Naive thymus-derived CD4-positive, alpha-beta T cell (primary cell): ENCODE measurements at regions of chr14 and their contacts with region 1.

Region 1: DNA sequence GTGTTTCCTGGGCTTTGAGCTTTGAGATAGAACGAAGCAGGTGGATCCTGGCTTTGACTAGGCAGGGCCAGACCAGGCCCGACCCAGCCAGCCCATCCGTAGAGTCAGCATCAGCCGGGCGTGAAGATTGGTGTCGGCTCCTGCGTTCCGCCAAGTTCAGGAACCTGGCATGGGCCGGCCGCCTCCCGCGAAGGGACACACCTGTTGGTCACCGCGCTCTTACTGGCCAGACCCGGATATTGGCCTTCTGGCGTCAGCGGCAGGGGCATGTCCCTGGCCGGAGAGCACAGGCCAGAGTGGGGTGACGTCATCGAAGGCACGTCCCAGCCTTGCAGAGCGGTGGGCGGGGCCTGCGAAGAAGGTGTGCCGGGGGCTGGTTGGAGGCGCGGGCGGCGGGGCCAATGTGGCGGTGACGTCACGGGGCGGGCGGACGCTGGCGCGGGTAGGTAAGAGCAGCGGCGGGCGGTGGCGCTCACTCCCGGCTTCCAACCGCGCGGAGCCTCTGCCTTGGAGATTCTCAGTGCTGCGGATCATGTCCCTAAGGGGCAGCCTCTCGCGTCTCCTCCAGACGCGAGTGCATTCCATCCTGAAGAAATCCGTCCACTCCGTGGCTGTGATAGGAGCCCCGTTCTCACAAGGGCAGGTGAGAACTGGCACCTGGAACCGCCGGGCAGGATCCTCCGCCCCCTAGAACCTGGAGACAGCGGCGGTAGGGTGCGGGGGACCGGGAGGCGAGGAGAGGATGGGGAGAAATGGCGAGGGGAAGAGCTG is at the start of gene ARG2:
- DNase-seq: peak; percentile 92 to 98 (median 95)
- ATAC-seq: peak; percentile 95
- H3K4me3 ChIP-seq: peak within 1 kb of the TSS; percentile 93
- H3K4me3 Mint-ChIP-seq: peak within 1 kb of the TSS; percentile 89 to 93 (median 90)
- H3K27ac ChIP-seq: peak within 1 kb of the TSS; percentile 82
- H3K27ac Mint-ChIP-seq: peak within 1 kb of the TSS; percentile 70 to 97 (median 94)
- H3K4me1 ChIP-seq: peaks cover 12 to 18% of the 10 kb centered on the region in 2 donors
- H3K4me1 Mint-ChIP-seq: peaks cover 21 to 42% (median 37%) of the 10 kb centered on the region in 7 donors
- H3K27me3 ChIP-seq: no peaks in the 10 kb centered on the region
- H3K27me3 Mint-ChIP-seq: peaks cover 0 to 23% (median 0%) of the 10 kb centered on the region in 5 donors
- total RNA-seq, gene ARG2: 0.46 to 5.1 (median 3.2) TPM

Region 2: DNA sequence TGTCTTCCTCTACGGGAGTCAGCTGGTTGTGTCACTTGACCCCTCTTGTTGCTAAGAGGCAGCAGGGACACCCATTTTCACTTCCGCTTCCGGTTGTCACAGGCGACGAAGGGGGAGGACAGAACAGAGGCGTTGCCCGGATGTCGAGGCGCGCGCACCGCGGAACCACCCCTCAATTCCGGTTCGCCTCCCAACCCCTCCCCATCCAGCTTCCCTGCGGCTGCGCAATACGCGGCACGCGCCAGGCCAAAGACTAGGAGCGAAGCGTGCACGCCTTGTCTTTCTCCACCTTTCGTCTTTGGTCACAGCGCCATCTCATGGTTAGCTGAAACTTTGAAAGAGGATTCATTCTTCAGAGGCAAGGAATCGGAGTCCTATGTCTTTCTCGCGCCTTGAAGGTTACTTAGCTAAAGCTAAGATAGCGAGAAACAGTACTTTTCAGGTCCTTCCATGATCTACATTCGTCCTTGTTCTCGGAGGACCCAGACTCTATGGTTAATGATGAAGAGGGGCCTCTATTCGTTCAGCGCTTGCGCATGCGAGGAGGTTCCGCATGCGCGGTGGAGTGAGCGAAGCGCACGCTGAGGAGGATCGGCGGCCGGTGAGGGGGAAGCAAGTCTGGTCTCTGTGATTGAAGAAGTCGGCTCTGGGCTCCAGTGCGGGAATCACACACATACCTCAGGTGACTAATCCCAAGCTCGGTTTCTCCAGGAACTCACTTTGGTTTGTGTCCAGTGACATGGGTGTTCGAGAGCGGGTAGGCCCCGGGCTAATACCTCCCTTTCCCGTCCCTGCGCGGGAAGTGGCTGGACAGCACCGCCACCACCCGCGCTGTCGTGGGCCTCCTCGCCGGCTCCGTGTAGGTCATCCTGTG is 259.6 kb before region 1 on chr14 and contains the starts of genes ATP6V1D and EIF2S1:
- CTCF ChIA-PET with region 1: interaction called, 3 read pairs
- POLR2A ChIA-PET with region 1: no interaction called
- intact Hi-C with region 1: loop called in 1 of 2 experiments (anchors 1 kb)
- DNase-seq: peak; percentile 97 to 100 (median 100)
- ATAC-seq: peak; percentile 94
- H3K4me3 ChIP-seq: peak within 1 kb of the TSS; percentile 87
- H3K4me3 Mint-ChIP-seq: peak within 1 kb of the TSS; percentile 93 to 99 (median 98)
- H3K27ac ChIP-seq: peak within 1 kb of the TSS; percentile 82
- H3K27ac Mint-ChIP-seq: peak within 1 kb of the TSS; percentile 94 to 99 (median 96)
- H3K4me1 ChIP-seq: peaks cover 24 to 38% of the 10 kb centered on the region in 2 donors
- H3K4me1 Mint-ChIP-seq: peaks cover 43 to 94% (median 85%) of the 10 kb centered on the region in 7 donors
- H3K27me3 ChIP-seq: no peaks in the 10 kb centered on the region
- H3K27me3 Mint-ChIP-seq: peaks cover 0 to 5% (median 0%) of the 10 kb centered on the region in 5 donors
- total RNA-seq, gene ATP6V1D: 28.5 to 41.5 (median 33.4) TPM
- total RNA-seq, gene EIF2S1: 41.4 to 115 (median 49.4) TPM

Region 3: DNA sequence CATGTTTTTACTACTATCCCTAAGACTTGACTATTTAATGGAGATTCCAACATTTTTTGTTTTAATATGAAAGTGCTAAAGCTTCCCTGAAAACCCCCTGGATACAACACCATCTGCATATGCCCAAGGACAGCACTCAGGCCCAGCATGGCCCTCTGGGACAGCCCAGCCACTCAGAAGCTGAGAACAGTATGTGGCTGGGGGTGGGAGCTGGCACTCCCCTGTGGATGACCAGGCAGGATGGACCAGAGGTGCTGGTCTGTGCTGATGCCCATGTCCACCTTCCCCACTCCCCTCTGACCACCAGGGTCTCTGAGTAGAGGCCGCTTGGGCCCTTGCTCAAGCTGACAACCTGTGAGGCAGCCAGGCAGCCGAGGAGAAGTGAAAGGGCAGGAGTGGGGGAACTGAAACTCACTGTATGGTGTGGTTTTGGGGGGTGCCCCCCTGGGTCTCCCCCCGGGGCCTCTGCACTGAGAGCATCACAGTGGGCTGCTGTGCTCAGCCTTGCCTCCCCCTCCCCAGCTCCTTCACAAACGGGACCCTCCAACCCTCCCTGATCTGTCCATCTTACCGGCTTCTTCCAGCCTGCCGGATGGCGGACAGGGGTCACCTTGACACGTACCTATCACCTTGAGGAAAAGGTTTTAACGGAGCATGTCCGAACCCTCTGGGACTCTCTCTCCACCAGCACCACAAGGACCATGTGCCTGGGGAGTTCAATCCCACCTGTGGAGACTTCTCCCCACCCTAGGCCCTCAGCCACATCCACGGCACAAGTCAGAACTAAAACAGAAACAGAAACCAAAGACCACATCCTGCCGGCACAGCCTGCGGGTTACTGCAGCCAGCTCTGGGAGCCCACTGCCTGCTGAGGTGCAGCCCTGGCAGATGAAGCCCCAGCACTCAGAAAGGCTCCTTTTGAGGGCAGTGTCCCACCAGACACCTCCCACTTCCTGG is 131.4 kb before region 1 on chr14 and contains the start of gene TMEM229B:
- CTCF ChIA-PET with region 1: no interaction called
- POLR2A ChIA-PET with region 1: no interaction called
- intact Hi-C with region 1: no loop called
- DNase-seq: peak; percentile 45 to 86 (median 81)
- ATAC-seq: peak; percentile 95
- H3K4me3 ChIP-seq: peak within 1 kb of the TSS; percentile 74
- H3K4me3 Mint-ChIP-seq: peak within 1 kb of the TSS; percentile 92 to 99 (median 98)
- H3K27ac ChIP-seq: peak within 1 kb of the TSS; percentile 85
- H3K27ac Mint-ChIP-seq: peak within 1 kb of the TSS; percentile 96 to 100 (median 99)
- H3K4me1 ChIP-seq: peaks cover 25 to 43% of the 10 kb centered on the region in 2 donors
- H3K4me1 Mint-ChIP-seq: peaks cover 46 to 76% (median 68%) of the 10 kb centered on the region in 7 donors
- H3K27me3 ChIP-seq: no peaks in the 10 kb centered on the region
- H3K27me3 Mint-ChIP-seq: peaks cover 0 to 4% (median 0%) of the 10 kb centered on the region in 5 donors
- total RNA-seq, gene TMEM229B: 19.1 to 32.2 (median 30.6) TPM

Region 4: DNA sequence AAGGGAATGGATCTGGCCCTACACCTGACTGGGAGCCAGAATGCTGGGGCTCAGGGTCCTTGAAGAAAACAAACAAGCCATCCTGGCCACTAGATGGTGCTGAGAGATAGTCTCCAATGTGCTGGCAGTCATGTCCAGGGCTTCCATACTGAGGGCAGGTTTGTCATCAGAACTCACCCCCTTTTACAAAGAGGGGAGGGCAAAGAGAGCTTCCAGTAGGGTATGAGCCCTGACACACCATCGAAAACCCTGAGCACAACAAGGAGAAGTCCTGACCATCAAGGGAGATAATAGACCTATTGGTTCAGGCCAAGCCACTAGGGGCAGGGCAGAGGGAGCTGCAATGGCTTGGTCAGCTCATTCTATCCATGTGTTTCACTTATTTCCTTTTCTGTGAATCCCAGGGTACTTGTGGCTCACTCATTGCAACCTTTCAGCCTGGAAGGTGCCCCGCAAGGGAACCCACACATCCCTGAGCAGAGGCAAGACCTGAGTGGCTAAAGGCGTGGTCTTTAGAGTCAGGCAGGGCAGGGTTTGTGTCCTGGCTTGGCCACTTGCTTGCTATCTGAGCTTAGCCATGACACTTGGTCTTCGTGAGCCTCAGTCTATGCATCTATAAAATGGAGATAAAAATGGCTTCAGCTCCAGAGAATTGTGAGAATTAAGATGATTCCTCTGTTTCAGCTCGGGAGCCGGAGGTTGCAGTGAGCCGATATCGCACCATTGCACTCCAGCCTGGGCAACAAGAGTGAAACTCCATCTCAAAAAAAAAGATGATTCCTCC is 92.8 kb before region 1 on chr14:
- CTCF ChIA-PET with region 1: no interaction called
- POLR2A ChIA-PET with region 1: no interaction called
- intact Hi-C with region 1: loop called in 1 of 2 experiments (anchors 1 kb)
- DNase-seq: peak in 5 of 9 donors; percentile 33 to 46 (median 35)
- ATAC-seq: peak; percentile 78
- H3K4me3 ChIP-seq: no peak overlapping the region
- H3K4me3 Mint-ChIP-seq: no peak overlapping the region
- H3K27ac ChIP-seq: no peak overlapping the region
- H3K27ac Mint-ChIP-seq: no peak overlapping the region
- H3K4me1 ChIP-seq: no peaks in the 10 kb centered on the region
- H3K4me1 Mint-ChIP-seq: peaks cover 0 to 6% (median 0%) of the 10 kb centered on the region in 7 donors
- H3K27me3 ChIP-seq: no peaks in the 10 kb centered on the region
- H3K27me3 Mint-ChIP-seq: peaks cover 30 to 75% (median 36%) of the 10 kb centered on the region in 5 donors

Region 5: DNA sequence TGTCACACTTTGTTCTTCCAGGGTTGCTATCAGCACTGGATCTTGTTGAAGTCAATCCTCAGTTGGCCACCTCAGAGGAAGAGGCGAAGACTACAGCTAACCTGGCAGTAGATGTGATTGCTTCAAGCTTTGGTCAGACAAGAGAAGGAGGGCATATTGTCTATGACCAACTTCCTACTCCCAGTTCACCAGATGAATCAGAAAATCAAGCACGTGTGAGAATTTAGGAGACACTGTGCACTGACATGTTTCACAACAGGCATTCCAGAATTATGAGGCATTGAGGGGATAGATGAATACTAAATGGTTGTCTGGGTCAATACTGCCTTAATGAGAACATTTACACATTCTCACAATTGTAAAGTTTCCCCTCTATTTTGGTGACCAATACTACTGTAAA is 31.1 kb after region 1 on chr14:
- CTCF ChIA-PET with region 1: no interaction called
- POLR2A ChIA-PET with region 1: no interaction called
- intact Hi-C with region 1: loop called in 1 of 2 experiments (anchors 2 kb)
- DNase-seq: no peak
- ATAC-seq: no peak
- H3K4me3 ChIP-seq: no peak overlapping the region
- H3K4me3 Mint-ChIP-seq: no peak overlapping the region
- H3K27ac ChIP-seq: no peak overlapping the region
- H3K27ac Mint-ChIP-seq: peak overlapping the region in 3 of 9 donors; percentile 3 to 46 (median 38)
- H3K4me1 ChIP-seq: no peaks in the 10 kb centered on the region
- H3K4me1 Mint-ChIP-seq: no peaks in the 10 kb centered on the region
- H3K27me3 ChIP-seq: no peaks in the 10 kb centered on the region
- H3K27me3 Mint-ChIP-seq: no peaks in the 10 kb centered on the region

Region 6: DNA sequence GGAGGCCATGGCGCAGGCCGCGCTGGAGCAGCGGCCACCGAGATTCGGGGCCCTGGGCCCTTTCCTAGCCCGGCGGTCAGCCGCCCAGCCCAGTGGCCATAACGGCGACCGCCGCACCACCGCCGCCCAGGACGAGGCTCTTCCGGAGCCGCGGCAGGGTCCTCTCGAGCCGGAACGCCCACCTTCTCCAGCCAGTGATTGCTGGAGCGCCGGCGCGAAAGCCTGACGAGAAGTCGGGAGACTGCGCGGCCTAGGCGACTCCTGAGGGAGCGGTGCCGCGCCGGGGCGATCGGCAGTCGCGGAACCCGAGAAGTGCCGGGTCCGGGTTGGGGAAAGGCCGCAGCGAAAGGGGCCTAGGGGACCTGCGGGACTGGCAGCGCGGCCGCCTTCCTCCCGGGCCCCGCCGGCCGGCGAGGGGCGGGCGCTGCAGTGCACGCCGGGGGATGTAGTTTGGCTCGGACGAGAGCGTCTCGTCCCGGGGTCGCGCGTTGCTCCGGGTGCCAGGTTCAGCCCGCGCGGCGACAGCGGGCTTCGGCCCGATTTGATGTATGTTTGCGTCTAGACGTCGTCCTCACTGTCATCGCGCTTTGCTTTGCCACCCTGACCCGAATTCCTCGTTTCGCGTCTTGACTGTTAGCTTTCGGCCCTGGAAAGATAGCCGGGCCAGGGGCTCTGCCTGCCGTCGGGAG is 55.0 kb after region 1 on chr14 and contains the start of gene VTI1B:
- CTCF ChIA-PET with region 1: interaction called, 8 read pairs
- POLR2A ChIA-PET with region 1: interaction called, 4 read pairs
- intact Hi-C with region 1: loop called (anchors 1 kb)
- DNase-seq: peak; percentile 71 to 84 (median 80)
- ATAC-seq: peak; percentile 95
- H3K4me3 ChIP-seq: peak within 1 kb of the TSS; percentile 65
- H3K4me3 Mint-ChIP-seq: peak within 1 kb of the TSS; percentile 91 to 96 (median 93)
- H3K27ac ChIP-seq: peak within 1 kb of the TSS; percentile 95
- H3K27ac Mint-ChIP-seq: peak within 1 kb of the TSS; percentile 82 to 96 (median 92)
- H3K4me1 ChIP-seq: peaks cover 17 to 21% of the 10 kb centered on the region in 2 donors
- H3K4me1 Mint-ChIP-seq: peaks cover 22 to 62% (median 55%) of the 10 kb centered on the region in 7 donors
- H3K27me3 ChIP-seq: no peaks in the 10 kb centered on the region
- H3K27me3 Mint-ChIP-seq: no peaks in the 10 kb centered on the region
- total RNA-seq, gene VTI1B: 49.2 to 82.4 (median 65.9) TPM

Region 7: GRCh38 chr14:67695394-67695949 is 75.8 kb after region 1 on chr14 and contains the start of gene RDH11:
- CTCF ChIA-PET with region 1: interaction called, 5 read pairs
- POLR2A ChIA-PET with region 1: interaction called, 5 read pairs
- intact Hi-C with region 1: loop called (anchors 1 kb)
- DNase-seq: peak; percentile 53 to 89 (median 82)
- ATAC-seq: peak; percentile 97
- H3K4me3 ChIP-seq: peak within 1 kb of the TSS; percentile 88
- H3K4me3 Mint-ChIP-seq: peak within 1 kb of the TSS; percentile 87 to 98 (median 92)
- H3K27ac ChIP-seq: peak within 1 kb of the TSS; percentile 75
- H3K27ac Mint-ChIP-seq: peak within 1 kb of the TSS; percentile 66 to 95 (median 87)
- H3K4me1 ChIP-seq: peaks cover 0 to 3% of the 10 kb centered on the region in 2 donors
- H3K4me1 Mint-ChIP-seq: peaks cover 12 to 32% (median 21%) of the 10 kb centered on the region in 7 donors
- H3K27me3 ChIP-seq: no peaks in the 10 kb centered on the region
- H3K27me3 Mint-ChIP-seq: no peaks in the 10 kb centered on the region
- total RNA-seq, gene RDH11: 22.3 to 44.5 (median 42.6) TPM